ENCODE measurements at regions of chr15 and their contacts with region 1.

Region 1: DNA sequence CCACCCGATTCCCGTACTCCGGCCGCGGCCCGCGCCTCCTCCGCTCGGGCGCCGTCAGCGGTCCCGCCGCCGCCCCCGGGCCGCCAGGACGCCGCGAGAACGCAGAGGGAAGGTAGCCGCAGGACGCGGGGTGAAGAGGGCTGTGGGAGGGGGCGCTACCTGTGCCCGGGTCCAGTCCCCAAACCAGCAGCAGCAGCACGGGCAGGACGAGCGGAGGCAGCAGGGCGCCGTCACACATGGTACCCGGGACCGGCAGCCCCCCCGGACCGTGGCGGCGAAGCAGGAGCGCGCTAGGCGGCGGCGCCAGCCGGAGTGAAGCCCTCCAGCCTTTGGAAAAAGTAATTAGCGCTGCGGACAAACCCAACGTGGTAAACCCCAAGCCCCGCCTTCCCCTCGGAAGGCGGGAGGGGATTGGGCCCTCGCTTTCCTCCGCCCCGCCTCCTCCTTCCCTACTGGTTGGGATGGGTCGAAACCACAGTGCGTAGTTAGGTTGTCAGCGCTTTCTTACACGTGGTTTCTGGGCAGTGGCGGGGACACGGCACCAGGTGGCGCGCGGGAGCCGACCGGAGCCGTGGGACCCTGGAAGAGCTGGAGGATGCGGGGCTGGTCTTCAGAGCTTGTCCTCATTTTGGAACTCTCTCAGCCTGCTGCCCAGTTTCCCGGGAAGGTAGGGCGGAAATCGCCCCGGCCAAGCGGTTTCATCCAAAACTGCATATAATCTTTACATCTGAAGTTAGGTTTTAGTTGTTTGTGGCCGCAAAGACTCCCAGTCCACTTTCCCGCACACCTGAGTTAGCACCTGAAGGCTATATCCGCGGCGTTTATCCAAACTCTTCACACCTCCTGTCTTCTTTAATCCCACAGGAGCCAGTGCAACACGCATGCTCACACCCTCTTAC is at the start of gene ADAMTS17:
- DNase-seq: peak; percentile 91 to 98
- ATAC-seq: peak; percentile 95 to 99 (median 95)
- H3K4me3 ChIP-seq: peak within 1 kb of the TSS; percentile 35
- H3K4me3 Mint-ChIP-seq: peak within 1 kb of the TSS; percentile 67
- H3K27ac ChIP-seq: no peak within 1 kb of the TSS
- H3K27ac Mint-ChIP-seq: peak within 1 kb of the TSS in 1 of 2 donors; percentile 58
- H3K4me1 ChIP-seq: peaks cover 21% of the 10 kb centered on the region
- H3K4me1 Mint-ChIP-seq: peaks cover 11 to 13% of the 10 kb centered on the region in 2 donors
- H3K27me3 ChIP-seq: peaks cover 8% of the 10 kb centered on the region
- H3K27me3 Mint-ChIP-seq: peaks cover 22 to 35% of the 10 kb centered on the region in 2 donors
- CTCF ChIP-seq: peak; percentile 93
- total RNA-seq, gene ADAMTS17: 4.8 to 9.5 (median 5.3) TPM

Region 2: DNA sequence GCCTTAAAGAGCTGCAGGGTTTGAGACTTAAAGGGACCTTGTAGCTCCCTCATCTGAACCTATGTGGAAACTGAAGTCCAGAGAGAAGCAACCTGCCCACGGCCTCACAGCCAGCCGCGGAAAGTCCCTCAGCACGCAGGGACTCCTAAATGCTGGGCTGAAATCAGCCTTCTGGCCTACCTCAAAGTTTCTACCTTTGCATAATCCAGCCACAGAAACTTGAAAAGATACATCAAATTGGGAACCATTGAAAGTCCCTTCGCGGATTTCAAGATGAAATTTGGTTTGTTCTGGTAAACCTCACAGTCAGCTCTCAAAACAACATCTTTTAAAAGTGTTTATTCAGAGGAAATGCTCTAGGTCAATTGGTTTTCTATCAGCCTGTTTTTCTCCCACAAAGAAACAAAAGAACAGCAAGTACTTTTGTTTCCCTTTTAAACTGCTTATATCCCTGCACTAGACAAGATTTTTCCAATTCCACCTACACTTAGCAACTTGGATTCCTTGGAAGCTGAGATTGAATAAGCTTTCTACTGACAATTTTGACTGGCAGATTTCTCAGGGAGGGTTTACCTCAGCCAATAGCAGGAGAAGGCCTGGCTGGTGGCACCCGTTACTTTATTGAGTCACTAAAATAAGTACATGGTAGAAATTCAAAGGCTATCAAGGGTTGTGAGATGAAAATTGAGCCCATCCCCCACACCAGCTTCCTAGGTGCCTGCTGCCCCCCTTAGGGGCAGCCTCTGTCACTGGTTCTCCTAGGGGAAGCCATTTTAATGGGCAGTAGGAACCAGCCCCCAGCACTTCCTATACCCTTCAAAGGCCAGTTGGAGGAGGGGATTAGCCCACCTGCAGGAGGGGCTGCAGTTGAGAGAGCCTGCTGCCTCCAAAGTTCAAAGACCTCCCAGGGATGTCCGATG is 171.4 kb before region 1 on chr15:
- intact Hi-C with region 1: no loop called
- DNase-seq: peak in 1 of 2 donors; percentile 8
- ATAC-seq: peak in 1 of 3 donors; percentile 15
- H3K4me3 ChIP-seq: no peak overlapping the region
- H3K4me3 Mint-ChIP-seq: no peak overlapping the region
- H3K27ac ChIP-seq: no peak overlapping the region
- H3K27ac Mint-ChIP-seq: no peak overlapping the region
- H3K4me1 ChIP-seq: peaks cover 17% of the 10 kb centered on the region
- H3K4me1 Mint-ChIP-seq: no peaks in the 10 kb centered on the region
- H3K27me3 ChIP-seq: no peaks in the 10 kb centered on the region
- H3K27me3 Mint-ChIP-seq: peaks cover 0 to 2% of the 10 kb centered on the region in 2 donors
- CTCF ChIP-seq: no peak

Region 3: DNA sequence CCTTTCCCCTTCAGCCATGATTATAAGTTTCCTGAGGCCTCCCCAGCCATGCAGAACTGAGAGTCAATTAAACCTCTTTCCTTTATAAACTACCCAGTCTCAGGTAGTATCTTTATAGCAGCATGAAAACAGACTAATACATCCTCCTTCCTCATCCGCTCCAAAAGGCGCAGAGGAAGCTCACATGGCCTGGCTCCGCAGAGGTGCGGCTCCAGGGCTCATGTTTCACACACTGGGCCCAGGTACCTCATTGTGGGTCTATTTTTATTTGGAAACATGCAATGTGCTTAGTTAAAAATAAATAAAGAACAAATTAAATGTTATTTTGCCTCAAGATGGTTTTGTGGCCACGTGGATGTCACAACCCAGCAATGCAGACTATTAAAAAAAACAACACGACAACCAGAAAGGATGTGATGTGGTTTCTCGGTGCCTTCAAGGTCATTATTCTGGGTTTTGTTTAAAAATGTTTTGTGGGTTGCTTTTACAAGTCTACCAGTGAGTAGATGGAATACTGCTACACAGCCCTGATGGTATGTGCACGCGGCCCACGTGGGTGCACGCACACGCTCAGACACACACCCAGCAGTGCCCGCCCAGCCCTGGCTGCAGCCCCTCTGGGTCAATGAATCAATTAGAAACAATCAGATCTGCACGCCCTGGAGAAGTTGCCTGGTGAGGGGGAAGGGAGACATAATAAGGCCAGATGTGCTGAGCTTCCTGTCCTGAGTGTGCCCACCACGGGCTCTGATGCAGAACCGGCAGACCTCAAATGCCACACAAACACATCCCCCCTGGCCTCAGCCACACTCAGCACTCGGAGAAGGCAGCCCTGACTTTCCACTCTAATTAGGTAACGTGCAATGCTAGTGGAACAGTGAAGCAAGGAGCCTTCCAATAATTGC is 140.3 kb before region 1 on chr15:
- intact Hi-C with region 1: loop called (anchors 5 kb)
- DNase-seq: peak in 1 of 2 donors; percentile 51
- ATAC-seq: peak; percentile 71 to 80 (median 77)
- H3K4me3 ChIP-seq: no peak overlapping the region
- H3K4me3 Mint-ChIP-seq: peak overlapping the region; percentile 91
- H3K27ac ChIP-seq: no peak overlapping the region
- H3K27ac Mint-ChIP-seq: peak overlapping the region; percentile 70 to 81
- H3K4me1 ChIP-seq: peaks cover 38% of the 10 kb centered on the region
- H3K4me1 Mint-ChIP-seq: peaks cover 40 to 44% of the 10 kb centered on the region in 2 donors
- H3K27me3 ChIP-seq: peaks cover 4% of the 10 kb centered on the region
- H3K27me3 Mint-ChIP-seq: peaks cover 12 to 41% of the 10 kb centered on the region in 2 donors
- CTCF ChIP-seq: no peak

Region 4: GRCh38 chr15:100250176-100250800 is 91.6 kb before region 1 on chr15:
- intact Hi-C with region 1: no loop called
- DNase-seq: no peak
- ATAC-seq: no peak
- H3K4me3 ChIP-seq: no peak overlapping the region
- H3K4me3 Mint-ChIP-seq: no peak overlapping the region
- H3K27ac ChIP-seq: no peak overlapping the region
- H3K27ac Mint-ChIP-seq: no peak overlapping the region
- H3K4me1 ChIP-seq: no peaks in the 10 kb centered on the region
- H3K4me1 Mint-ChIP-seq: peaks cover 0 to 9% of the 10 kb centered on the region in 2 donors
- H3K27me3 ChIP-seq: no peaks in the 10 kb centered on the region
- H3K27me3 Mint-ChIP-seq: no peaks in the 10 kb centered on the region
- CTCF ChIP-seq: no peak

Region 5: GRCh38 chr15:100284701-100285100 is 57.2 kb before region 1 on chr15:
- intact Hi-C with region 1: no loop called
- DNase-seq: no peak
- ATAC-seq: no peak
- H3K4me3 ChIP-seq: no peak overlapping the region
- H3K4me3 Mint-ChIP-seq: no peak overlapping the region
- H3K27ac ChIP-seq: no peak overlapping the region
- H3K27ac Mint-ChIP-seq: no peak overlapping the region
- H3K4me1 ChIP-seq: no peaks in the 10 kb centered on the region
- H3K4me1 Mint-ChIP-seq: no peaks in the 10 kb centered on the region
- H3K27me3 ChIP-seq: peaks cover 3% of the 10 kb centered on the region
- H3K27me3 Mint-ChIP-seq: peaks cover 0 to 2% of the 10 kb centered on the region in 2 donors
- CTCF ChIP-seq: no peak

Region 6: GRCh38 chr15:100318884-100319283 is 23.0 kb before region 1 on chr15:
- intact Hi-C with region 1: no loop called
- DNase-seq: no peak
- ATAC-seq: no peak
- H3K4me3 ChIP-seq: no peak overlapping the region
- H3K4me3 Mint-ChIP-seq: no peak overlapping the region
- H3K27ac ChIP-seq: no peak overlapping the region
- H3K27ac Mint-ChIP-seq: no peak overlapping the region
- H3K4me1 ChIP-seq: no peaks in the 10 kb centered on the region
- H3K4me1 Mint-ChIP-seq: no peaks in the 10 kb centered on the region
- H3K27me3 ChIP-seq: no peaks in the 10 kb centered on the region
- H3K27me3 Mint-ChIP-seq: peaks cover 0 to 6% of the 10 kb centered on the region in 2 donors
- CTCF ChIP-seq: no peak

Region 7: DNA sequence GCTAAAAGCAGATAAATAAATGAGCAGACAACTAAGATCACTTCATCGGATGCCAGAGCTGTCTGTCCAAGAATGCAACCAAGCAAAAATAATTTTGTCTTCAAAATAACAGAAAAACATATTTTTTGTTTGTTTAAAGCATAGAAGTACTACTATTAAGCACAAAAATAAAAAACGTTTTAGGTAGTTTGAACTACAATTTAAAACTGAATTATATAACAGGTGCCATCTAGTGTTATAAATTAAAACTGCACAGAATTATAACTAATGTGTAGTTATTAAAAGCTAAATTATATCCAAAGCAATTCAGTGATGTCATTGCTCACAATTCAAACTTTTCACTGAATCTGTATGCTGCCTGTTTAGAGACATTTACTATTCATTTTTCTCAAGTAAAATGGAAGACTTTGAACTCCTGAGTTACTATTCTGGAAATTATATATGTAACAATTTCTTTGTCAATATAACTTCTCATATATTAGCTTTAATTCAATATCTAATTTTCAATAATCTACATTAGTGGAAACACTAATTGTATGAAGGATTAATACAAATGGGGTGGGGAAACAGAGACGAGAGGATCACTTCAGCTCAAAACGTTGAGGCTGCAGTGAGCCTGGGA is 230.6 kb after region 1 on chr15:
- intact Hi-C with region 1: loop called (anchors 2 kb)
- DNase-seq: peak in 1 of 2 donors; percentile 55
- ATAC-seq: no peak
- H3K4me3 ChIP-seq: no peak overlapping the region
- H3K4me3 Mint-ChIP-seq: no peak overlapping the region
- H3K27ac ChIP-seq: no peak overlapping the region
- H3K27ac Mint-ChIP-seq: no peak overlapping the region
- H3K4me1 ChIP-seq: no peaks in the 10 kb centered on the region
- H3K4me1 Mint-ChIP-seq: peaks cover 9 to 12% of the 10 kb centered on the region in 2 donors
- H3K27me3 ChIP-seq: no peaks in the 10 kb centered on the region
- H3K27me3 Mint-ChIP-seq: no peaks in the 10 kb centered on the region
- CTCF ChIP-seq: peak; percentile 70

Measured in natural killer cell (primary cell).